ENCODE measurements at regions of chr2 and their contacts with region 1.

Region 1: DNA sequence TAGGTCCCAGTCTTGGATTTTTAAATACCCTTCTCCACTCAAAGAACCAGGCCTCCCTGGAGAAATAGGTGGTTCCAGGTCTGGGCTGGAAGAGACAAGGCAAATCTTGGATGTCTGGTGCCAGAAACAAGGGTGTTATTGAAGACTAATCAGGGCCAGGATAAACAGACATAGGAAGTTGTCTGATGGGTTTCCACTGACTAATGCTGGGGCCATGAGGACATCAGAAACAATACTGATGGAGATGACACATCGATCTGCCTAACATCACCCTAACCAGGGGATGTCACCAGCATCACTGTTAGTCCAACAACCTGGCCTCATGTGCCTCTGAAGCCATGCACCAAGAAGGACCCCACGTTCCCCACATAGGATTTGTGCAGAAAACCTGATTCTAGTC is 42.5 kb upstream of the GLI2 start:
- DNase-seq: no peak
- H3K4me3 ChIP-seq: no peak overlapping the region
- H3K27ac ChIP-seq: no peak overlapping the region
- H3K4me1 ChIP-seq: peaks cover 5% of the 10 kb centered on the region
- H3K27me3 ChIP-seq: peaks cover 17% of the 10 kb centered on the region in 2 experiments
- CTCF ChIP-seq: no peak
- POLR2A ChIP-seq: no peak

Region 2: DNA sequence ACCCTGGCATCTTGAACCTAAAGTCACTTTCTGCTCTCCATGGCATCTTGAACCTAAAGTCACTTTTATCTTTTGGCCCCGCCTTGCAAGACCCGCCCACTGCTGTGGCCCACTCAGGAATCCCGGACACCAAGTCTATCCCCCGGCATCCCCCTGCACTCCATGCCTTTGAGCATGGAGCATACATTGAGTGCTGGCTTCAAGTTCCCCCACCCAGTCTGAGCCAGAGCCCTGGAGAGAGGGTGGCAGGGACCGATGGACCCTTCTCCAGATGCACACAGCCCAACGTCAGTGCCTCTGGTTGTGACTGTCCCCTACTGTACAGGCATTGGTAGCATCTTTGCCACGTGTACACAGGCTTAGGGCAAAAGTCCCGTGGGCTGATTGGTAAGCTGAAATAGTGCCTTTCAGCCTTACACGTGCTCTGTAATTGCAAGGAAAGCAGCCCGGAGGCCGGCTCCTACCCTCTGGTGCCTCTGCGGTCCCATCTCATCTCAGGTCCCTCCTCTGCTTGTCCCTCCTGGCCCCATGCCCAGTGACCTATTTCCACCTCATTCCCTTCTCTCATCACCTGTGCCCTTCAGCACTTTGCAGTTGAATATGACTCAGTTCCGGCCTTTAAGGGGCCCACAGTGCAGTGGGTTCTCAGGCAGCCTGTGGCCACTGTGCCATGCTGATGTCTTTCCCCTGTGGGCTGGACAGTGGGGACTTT is 193.2 kb before region 1 on chr2:
- CTCF ChIA-PET with region 1: no interaction called
- POLR2A ChIA-PET with region 1: no interaction called
- dilution Hi-C with region 1: no loop called
- intact Hi-C with region 1: no loop called
- DNase-seq: no peak
- H3K4me3 ChIP-seq: no peak overlapping the region
- H3K27ac ChIP-seq: no peak overlapping the region
- H3K4me1 ChIP-seq: no peaks in the 10 kb centered on the region
- H3K27me3 ChIP-seq: peaks cover 0 to 21% of the 10 kb centered on the region in 2 experiments
- CTCF ChIP-seq: no peak
- POLR2A ChIP-seq: no peak

Region 3: DNA sequence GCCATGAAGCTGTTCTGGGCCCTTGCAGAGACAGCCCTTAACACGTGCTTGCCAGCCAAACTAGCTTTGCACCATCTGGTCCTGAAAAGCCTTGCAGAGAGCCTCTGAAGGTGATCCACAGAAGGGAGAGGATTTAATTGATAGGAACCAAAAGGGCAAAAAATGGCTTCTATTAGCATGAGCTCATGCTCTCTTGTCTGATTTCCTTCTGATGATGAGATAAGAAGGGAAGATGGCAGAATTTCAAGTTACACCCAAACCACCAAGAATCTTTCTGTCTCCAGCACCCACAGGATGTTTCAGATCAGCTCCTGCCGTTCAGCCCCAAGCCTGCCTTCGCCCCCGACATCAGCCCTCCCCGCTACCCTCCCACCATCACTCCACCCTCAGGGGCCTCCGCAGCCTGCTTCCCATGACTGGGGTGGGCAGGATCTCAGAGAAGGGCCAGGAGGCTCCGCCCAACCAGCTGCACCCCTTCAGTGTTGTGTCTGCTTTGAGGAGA is 19.1 kb after region 1 on chr2:
- CTCF ChIA-PET with region 1: interaction called, 12 read pairs
- POLR2A ChIA-PET with region 1: no interaction called
- dilution Hi-C with region 1: no loop called
- intact Hi-C with region 1: no loop called
- DNase-seq: no peak
- H3K4me3 ChIP-seq: no peak overlapping the region
- H3K27ac ChIP-seq: no peak overlapping the region
- H3K4me1 ChIP-seq: peaks cover 3% of the 10 kb centered on the region
- H3K27me3 ChIP-seq: peaks cover 16% of the 10 kb centered on the region in 2 experiments
- CTCF ChIP-seq: no peak
- POLR2A ChIP-seq: no peak

Region 4: GRCh38 chr2:120914839-120915521 is 221.9 kb after region 1 on chr2:
- CTCF ChIA-PET with region 1: interaction called, 5 read pairs
- POLR2A ChIA-PET with region 1: no interaction called
- dilution Hi-C with region 1: no loop called
- intact Hi-C with region 1: loop called (anchors 10 kb)
- DNase-seq: peak; percentile 92
- H3K4me3 ChIP-seq: no peak overlapping the region
- H3K27ac ChIP-seq: peak overlapping the region; percentile 26
- H3K4me1 ChIP-seq: peaks cover 18% of the 10 kb centered on the region
- H3K27me3 ChIP-seq: peaks cover 46 to 63% of the 10 kb centered on the region in 2 experiments
- CTCF ChIP-seq: peak in 1 of 2 donors; percentile 1
- POLR2A ChIP-seq: peak; percentile 29

Region 5: GRCh38 chr2:121008978-121009377 is 315.9 kb after region 1 on chr2:
- CTCF ChIA-PET with region 1: no interaction called
- POLR2A ChIA-PET with region 1: no interaction called
- dilution Hi-C with region 1: no loop called
- intact Hi-C with region 1: loop called (anchors 1 kb)
- DNase-seq: no peak
- H3K4me3 ChIP-seq: no peak overlapping the region
- H3K27ac ChIP-seq: no peak overlapping the region
- H3K4me1 ChIP-seq: no peaks in the 10 kb centered on the region
- H3K27me3 ChIP-seq: peaks cover 2 to 5% of the 10 kb centered on the region in 2 experiments
- CTCF ChIP-seq: peak in 1 of 2 donors; percentile 36
- POLR2A ChIP-seq: no peak

Region 6: GRCh38 chr2:121076885-121077549 is 383.9 kb after region 1 on chr2:
- CTCF ChIA-PET with region 1: interaction called, 251 read pairs
- POLR2A ChIA-PET with region 1: no interaction called
- dilution Hi-C with region 1: no loop called
- intact Hi-C with region 1: loop called (anchors 1 kb)
- DNase-seq: peak; percentile 33
- H3K4me3 ChIP-seq: no peak overlapping the region
- H3K27ac ChIP-seq: no peak overlapping the region
- H3K4me1 ChIP-seq: peaks cover 4% of the 10 kb centered on the region
- H3K27me3 ChIP-seq: peaks cover 9 to 10% of the 10 kb centered on the region in 2 experiments
- CTCF ChIP-seq: peak; percentile 97
- POLR2A ChIP-seq: no peak

Measured in endothelial cell of umbilical vein (primary cell).